BJ (cell line): ENCODE measurements at regions of chr17 and their contacts with region 1.

Region 1: GRCh38 chr17:4565209-4566141 is 5.1 kb upstream of the GGT6 start:
- DNase-seq: no peak
- H3K4me3 ChIP-seq: no peak overlapping the region
- H3K27me3 ChIP-seq: peaks cover 7% of the 10 kb centered on the region; the same call in 1 of the 2 replicates
- CTCF ChIP-seq: peak; percentile 94

Region 2: DNA sequence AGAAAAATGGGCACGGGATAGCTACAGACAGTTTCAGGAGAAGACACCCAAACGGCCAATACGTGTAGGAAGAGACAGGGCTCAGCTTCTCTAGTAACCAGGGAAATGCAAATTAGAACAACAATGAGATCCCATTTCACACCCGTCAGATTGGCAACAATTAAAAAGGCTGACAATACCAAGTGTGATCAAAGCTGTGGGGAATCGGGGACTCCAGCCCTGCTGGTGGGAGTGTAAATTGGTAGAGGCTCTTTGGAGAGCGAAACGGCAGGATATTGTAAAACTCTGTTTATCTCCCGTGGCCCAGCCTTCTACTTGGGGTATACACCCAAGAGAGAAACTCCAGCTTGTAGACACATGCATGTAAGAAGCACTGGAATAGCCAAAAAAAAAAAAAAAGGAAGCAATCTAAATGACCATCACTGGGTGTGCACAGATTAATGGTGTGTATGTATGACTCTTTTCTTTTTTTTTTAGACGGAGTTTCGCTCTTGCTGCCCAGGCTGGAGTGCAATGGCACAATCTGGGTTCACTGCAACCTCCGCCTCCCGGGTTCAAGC is 37.8 kb before region 1 on chr17:
- CTCF ChIA-PET with region 1: no interaction called
- POLR2A ChIA-PET with region 1: no interaction called
- DNase-seq: no peak
- H3K4me3 ChIP-seq: no peak overlapping the region
- H3K27me3 ChIP-seq: peaks cover 11% of the 10 kb centered on the region
- CTCF ChIP-seq: no peak

Region 3: GRCh38 chr17:4554997-4555799 is 10.3 kb before region 1 on chr17 and contains the start of gene MYBBP1A:
- CTCF ChIA-PET with region 1: interaction called, 43 read pairs
- POLR2A ChIA-PET with region 1: interaction called, 3 read pairs
- DNase-seq: peak; percentile 64
- H3K4me3 ChIP-seq: peak within 1 kb of the TSS; percentile 99
- H3K27me3 ChIP-seq: peaks cover 1% of the 10 kb centered on the region; the same call in 1 of the 2 replicates
- CTCF ChIP-seq: peak; percentile 42; the same call in 1 of the 2 replicates
- polyA plus RNA-seq, gene MYBBP1A: 12.4 and 24.1 TPM in 2 replicates

Region 4: DNA sequence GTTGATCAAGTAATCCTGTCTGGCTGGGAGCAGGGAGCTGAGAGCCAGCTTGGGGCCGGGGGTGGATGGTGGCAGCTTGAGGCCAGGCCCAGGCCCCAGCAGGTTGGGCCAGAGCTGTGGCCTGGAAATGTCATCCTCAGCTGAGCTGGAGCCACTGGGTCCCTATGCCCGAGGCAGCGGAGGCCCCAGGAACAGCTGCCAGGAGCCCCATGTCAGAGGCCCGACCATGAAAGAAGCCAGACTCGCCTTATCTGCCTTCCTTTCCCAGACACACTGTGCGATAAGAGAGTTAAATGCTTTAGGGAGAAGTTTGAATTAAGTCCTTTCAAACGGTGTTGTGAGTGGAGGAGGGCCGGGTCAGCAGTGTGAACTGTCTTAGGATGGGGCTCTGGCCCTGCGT is 22.3 kb after region 1 on chr17:
- CTCF ChIA-PET with region 1: interaction called, 37 read pairs
- POLR2A ChIA-PET with region 1: no interaction called
- DNase-seq: no peak
- H3K4me3 ChIP-seq: no peak overlapping the region
- H3K27me3 ChIP-seq: peaks cover 39% of the 10 kb centered on the region
- CTCF ChIP-seq: no peak

Region 5: GRCh38 chr17:4607773-4608187 is 42.3 kb after region 1 on chr17:
- CTCF ChIA-PET with region 1: interaction called, 52 read pairs
- POLR2A ChIA-PET with region 1: no interaction called
- DNase-seq: no peak
- H3K4me3 ChIP-seq: no peak overlapping the region
- H3K27me3 ChIP-seq: peaks cover 19% of the 10 kb centered on the region
- CTCF ChIP-seq: no peak

Region 6: GRCh38 chr17:4631836-4632580 is 66.5 kb after region 1 on chr17:
- CTCF ChIA-PET with region 1: interaction called, 122 read pairs
- POLR2A ChIA-PET with region 1: no interaction called
- DNase-seq: no peak
- H3K4me3 ChIP-seq: no peak overlapping the region
- H3K27me3 ChIP-seq: peaks cover 18% of the 10 kb centered on the region
- CTCF ChIP-seq: no peak